ENCODE measurements at regions of chr15 and their contacts with region 1.

Region 1: GRCh38 chr15:39786447-39787056 is 3.9 kb upstream of the FSIP1 start:
- DNase-seq: peak; percentile 66
- H3K4me3 ChIP-seq: no peak overlapping the region
- H3K27ac ChIP-seq: peak overlapping the region in 1 of 2 experiments; percentile 37; a peak in 1 of 4 replicates
- H3K4me1 ChIP-seq: peaks cover 16 to 20% of the 10 kb centered on the region in 2 experiments; a peak in 3 of 4 replicates
- H3K27me3 ChIP-seq: no peaks in the 10 kb centered on the region
- CTCF ChIP-seq: peak; percentile 72
- EP300 ChIP-seq: no peak
- RAD21 ChIP-seq: peak; percentile 76

Region 2: GRCh38 chr15:39125904-39126303 is 660.6 kb before region 1 on chr15:
- CTCF ChIA-PET with region 1: no interaction called
- POLR2A ChIA-PET with region 1: no interaction called
- DNase-seq: peak; percentile 51
- H3K4me3 ChIP-seq: no peak overlapping the region; a peak in 1 of 4 replicates
- H3K27ac ChIP-seq: peak overlapping the region in 1 of 2 experiments; percentile 79; a peak in 2 of 4 replicates
- H3K4me1 ChIP-seq: peaks cover 3 to 37% of the 10 kb centered on the region in 2 experiments
- H3K27me3 ChIP-seq: no peaks in the 10 kb centered on the region
- CTCF ChIP-seq: peak; percentile 76
- EP300 ChIP-seq: no peak
- RAD21 ChIP-seq: peak; percentile 72

Region 3: GRCh38 chr15:39799552-39800011 is 13.0 kb after region 1 on chr15:
- CTCF ChIA-PET with region 1: interaction called, 12 read pairs
- POLR2A ChIA-PET with region 1: no interaction called
- DNase-seq: no peak
- H3K4me3 ChIP-seq: no peak overlapping the region
- H3K27ac ChIP-seq: no peak overlapping the region
- H3K4me1 ChIP-seq: no peaks in the 10 kb centered on the region
- H3K27me3 ChIP-seq: no peaks in the 10 kb centered on the region
- CTCF ChIP-seq: no peak
- EP300 ChIP-seq: no peak
- RAD21 ChIP-seq: no peak

Region 4: DNA sequence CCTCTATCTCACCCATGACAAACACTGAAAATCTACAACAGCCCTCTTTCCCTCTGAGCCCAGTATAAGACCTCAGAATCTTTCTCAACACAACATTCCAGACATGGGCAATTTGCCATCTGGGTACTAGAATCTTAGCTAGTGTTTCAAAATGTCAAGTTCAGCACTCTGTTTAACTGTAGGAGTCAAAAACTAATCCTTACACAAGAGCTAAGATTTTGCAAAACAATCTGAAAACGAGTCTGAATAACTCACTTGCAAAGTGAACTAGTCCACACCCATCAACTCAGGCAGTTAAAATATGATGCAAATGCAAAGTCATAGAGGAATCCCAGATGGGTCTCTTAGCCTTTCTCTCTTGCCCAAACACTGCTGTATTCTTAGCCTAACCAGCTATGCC is 65.7 kb after region 1 on chr15:
- CTCF ChIA-PET with region 1: no interaction called
- POLR2A ChIA-PET with region 1: no interaction called
- DNase-seq: no peak
- H3K4me3 ChIP-seq: no peak overlapping the region
- H3K27ac ChIP-seq: peak overlapping the region in 1 of 2 experiments; percentile 52; a peak in 2 of 4 replicates
- H3K4me1 ChIP-seq: peaks cover 0 to 3% of the 10 kb centered on the region in 2 experiments; a peak in 1 of 4 replicates
- H3K27me3 ChIP-seq: no peaks in the 10 kb centered on the region
- CTCF ChIP-seq: no peak
- EP300 ChIP-seq: no peak
- RAD21 ChIP-seq: no peak

Region 5: DNA sequence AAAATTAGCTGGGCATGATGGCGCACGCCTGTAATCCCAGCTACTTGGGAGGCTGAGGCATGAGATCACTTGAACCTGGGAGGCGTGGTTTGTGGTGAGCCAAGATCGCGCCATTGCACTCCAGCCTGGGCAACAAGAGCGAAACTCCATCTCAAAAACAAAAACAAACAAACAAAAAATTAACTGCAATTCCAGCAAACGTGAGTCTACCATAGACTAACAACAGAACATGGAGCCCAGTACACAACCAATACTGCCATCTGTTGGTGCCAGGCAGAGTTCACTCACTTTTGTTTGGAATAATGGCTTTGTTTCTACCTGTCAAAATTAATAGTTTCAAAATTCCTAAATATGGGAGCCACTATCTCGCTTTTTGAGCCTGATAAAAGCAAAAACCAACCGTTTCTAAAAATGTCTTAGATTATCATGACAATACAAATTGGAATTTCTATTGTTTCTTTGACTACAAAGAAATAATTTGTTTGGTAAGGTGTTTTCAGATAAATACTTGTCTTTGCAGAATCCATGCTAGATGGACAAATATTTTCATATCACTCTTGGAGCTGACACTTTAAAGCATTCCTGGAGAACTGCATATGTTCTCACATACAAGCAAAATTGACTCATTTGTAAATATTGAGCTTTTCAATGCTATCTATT is 88.5 kb after region 1 on chr15:
- CTCF ChIA-PET with region 1: interaction called, 21 read pairs
- POLR2A ChIA-PET with region 1: no interaction called
- DNase-seq: peak; percentile 40
- H3K4me3 ChIP-seq: no peak overlapping the region
- H3K27ac ChIP-seq: no peak overlapping the region
- H3K4me1 ChIP-seq: no peaks in the 10 kb centered on the region
- H3K27me3 ChIP-seq: no peaks in the 10 kb centered on the region
- CTCF ChIP-seq: peak; percentile 77
- EP300 ChIP-seq: no peak
- RAD21 ChIP-seq: peak; percentile 80

Measured in SK-N-SH (cell line).